ENCODE measurements at regions of chr1 and their contacts with region 1.

Region 1: GRCh38 chr1:201447911-201448871 is 20.8 kb downstream of the PHLDA3 start:
- DNase-seq: peak; percentile 90 to 94 (median 92)
- ATAC-seq: peak; percentile 82 to 86
- H3K4me3 ChIP-seq: no peak overlapping the region
- H3K27ac ChIP-seq: peak overlapping the region; percentile 58
- H3K4me1 ChIP-seq: peaks cover 5% of the 10 kb centered on the region
- H3K27me3 ChIP-seq: no peaks in the 10 kb centered on the region

Region 2: GRCh38 chr1:201137579-201138310 is 310.4 kb before region 1 on chr1:
- intact Hi-C with region 1: no loop called
- DNase-seq: peak; percentile 87 to 95 (median 90)
- ATAC-seq: peak; percentile 81 to 84
- H3K4me3 ChIP-seq: no peak overlapping the region
- H3K27ac ChIP-seq: peak overlapping the region; percentile 20
- H3K4me1 ChIP-seq: peaks cover 2% of the 10 kb centered on the region
- H3K27me3 ChIP-seq: no peaks in the 10 kb centered on the region

Region 3: GRCh38 chr1:201481761-201482493 is 33.7 kb after region 1 on chr1:
- intact Hi-C with region 1: loop called in 2 of 4 experiments (anchors 5 kb)
- DNase-seq: peak; percentile 90 to 95 (median 95)
- ATAC-seq: peak; percentile 87 to 92
- H3K4me3 ChIP-seq: peak overlapping the region; percentile 1
- H3K27ac ChIP-seq: peak overlapping the region; percentile 12
- H3K4me1 ChIP-seq: peaks cover 6% of the 10 kb centered on the region
- H3K27me3 ChIP-seq: no peaks in the 10 kb centered on the region

Region 4: DNA sequence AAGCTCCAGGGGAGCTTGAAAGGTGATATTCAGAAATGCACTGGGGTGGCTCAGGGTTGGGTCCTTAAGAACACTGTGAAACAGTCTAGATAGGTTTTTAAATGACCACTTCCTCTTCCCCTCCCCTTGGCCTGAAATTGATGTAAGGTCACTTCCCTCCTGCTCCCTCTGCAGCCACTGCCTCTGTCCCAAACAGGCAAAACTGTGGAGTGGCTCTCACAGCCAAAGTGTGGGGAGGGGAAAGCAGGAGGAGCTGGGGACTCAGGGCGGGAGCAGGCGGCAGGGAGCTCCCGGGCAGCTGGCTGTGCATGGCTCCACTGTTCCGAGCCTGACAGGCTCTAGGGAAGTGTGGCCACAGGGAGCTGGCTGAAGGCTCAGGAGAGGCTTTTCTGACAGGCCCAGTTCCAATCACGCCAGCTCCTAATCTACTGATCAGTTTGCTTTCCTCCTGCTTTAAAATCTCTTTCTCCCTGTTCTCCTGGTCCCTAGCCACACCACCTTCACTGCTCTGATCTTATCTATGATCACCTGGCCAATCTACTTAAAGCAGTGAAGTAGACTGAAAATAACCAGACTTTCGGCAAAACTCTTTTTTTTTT is 63.8 kb after region 1 on chr1:
- intact Hi-C with region 1: loop called in 3 of 4 experiments (anchors 5 to 10 kb)
- DNase-seq: peak; percentile 82 to 93 (median 92)
- ATAC-seq: peak; percentile 88 to 93
- H3K4me3 ChIP-seq: no peak overlapping the region
- H3K27ac ChIP-seq: peak overlapping the region; percentile 91
- H3K4me1 ChIP-seq: peaks cover 8% of the 10 kb centered on the region
- H3K27me3 ChIP-seq: no peaks in the 10 kb centered on the region